K562 (cell line): ENCODE measurements at regions of chr4 and their contacts with region 1.

Region 1: DNA sequence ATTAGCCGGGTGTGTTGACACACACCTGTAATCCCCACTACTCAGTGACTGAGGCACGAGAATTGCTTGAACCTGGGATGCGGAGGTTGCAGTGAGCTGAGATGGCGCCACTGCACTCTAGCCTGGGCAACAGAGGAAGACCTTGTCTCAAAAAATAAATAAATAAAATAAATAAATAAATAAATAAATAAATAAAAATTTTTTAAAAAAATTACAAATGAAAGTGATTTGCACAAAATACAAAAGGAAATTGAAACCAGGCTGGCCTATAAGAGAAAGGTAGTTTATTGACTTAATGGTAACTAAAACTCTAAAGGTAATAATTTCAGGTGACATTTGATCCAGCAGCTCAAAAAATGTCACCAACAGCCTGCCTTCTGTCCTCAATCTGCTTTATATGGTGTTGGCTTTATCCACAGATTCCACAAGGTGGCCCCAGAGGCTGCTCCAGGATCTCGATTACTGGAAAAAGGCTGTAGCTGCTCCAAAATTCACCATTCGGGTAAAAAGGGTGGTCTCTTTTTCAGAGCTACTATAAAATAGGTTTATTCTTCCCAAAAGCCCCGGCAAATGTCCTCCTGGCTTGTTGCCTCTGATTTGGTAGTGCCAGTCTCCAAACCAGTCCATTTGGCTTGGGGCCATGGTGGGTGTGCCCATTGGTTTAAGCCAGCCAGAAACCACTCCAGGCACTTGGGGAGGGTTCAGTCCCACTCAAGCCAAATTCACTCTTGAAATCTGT is 61.4 kb upstream of the TRIM2 start:
- DNase-seq: peak in 2 of 4 experiments; percentile 68 to 74
- ATAC-seq: peak; percentile 84
- H3K4me3 ChIP-seq: no peak overlapping the region
- H3K27ac ChIP-seq: no peak overlapping the region
- H3K4me1 ChIP-seq: peaks cover 2 to 18% of the 10 kb centered on the region in 2 experiments; a peak in 2 of 5 replicates
- H3K27me3 ChIP-seq: peaks cover 0 to 4% of the 10 kb centered on the region in 2 experiments; a peak in 1 of 5 replicates
- CTCF ChIP-seq: peak; percentile 68 to 89 (median 76)
- EP300 ChIP-seq: peak; percentile 17; the same call in 1 of the 2 replicates
- POLR2A ChIP-seq: no peak
- RAD21 ChIP-seq: peak; percentile 83 to 85

Region 2: GRCh38 chr4:152910521-152910920 is 232.3 kb before region 1 on chr4:
- CTCF ChIA-PET with region 1: no interaction called
- POLR2A ChIA-PET with region 1: no interaction called
- in situ Hi-C with region 1: no loop called
- intact Hi-C with region 1: no loop called
- DNase-seq: no peak
- ATAC-seq: no peak
- H3K4me3 ChIP-seq: no peak overlapping the region
- H3K27ac ChIP-seq: no peak overlapping the region
- H3K4me1 ChIP-seq: no peaks in the 10 kb centered on the region
- H3K27me3 ChIP-seq: no peaks in the 10 kb centered on the region
- CTCF ChIP-seq: no peak
- EP300 ChIP-seq: no peak
- POLR2A ChIP-seq: no peak
- RAD21 ChIP-seq: no peak

Region 3: DNA sequence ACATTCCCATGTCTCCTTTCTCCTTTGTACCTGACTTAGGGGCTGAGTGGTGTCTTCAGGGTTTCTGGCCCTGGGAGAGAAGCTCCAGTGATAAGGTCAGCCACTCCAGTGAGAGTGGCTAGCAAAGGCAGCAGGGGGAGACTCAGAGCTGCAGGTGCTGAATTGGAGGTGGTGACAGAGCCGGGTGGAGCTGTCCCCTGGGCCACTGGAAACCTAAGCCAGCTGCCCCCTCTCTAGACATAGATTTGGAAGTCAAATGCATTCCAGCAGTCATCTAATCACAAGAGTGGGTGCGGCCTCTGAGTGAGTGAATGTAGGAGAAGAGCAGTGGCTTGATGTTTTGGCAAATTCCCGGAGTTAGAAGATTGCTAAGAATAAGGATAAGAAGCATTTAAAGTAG is 89.9 kb after region 1 on chr4:
- CTCF ChIA-PET with region 1: no interaction called
- POLR2A ChIA-PET with region 1: no interaction called
- in situ Hi-C with region 1: no loop called
- intact Hi-C with region 1: loop called (anchors 5 kb)
- DNase-seq: peak in 2 of 4 experiments; percentile 32 to 35
- ATAC-seq: peak; percentile 97
- H3K4me3 ChIP-seq: no peak overlapping the region
- H3K27ac ChIP-seq: no peak overlapping the region
- H3K4me1 ChIP-seq: no peaks in the 10 kb centered on the region
- H3K27me3 ChIP-seq: peaks cover 16 to 23% of the 10 kb centered on the region in 2 experiments
- CTCF ChIP-seq: peak; percentile 51 to 55 (median 54)
- EP300 ChIP-seq: no peak
- POLR2A ChIP-seq: no peak
- RAD21 ChIP-seq: peak; percentile 29 to 57; a peak in 2 of 4 replicates

Region 4: DNA sequence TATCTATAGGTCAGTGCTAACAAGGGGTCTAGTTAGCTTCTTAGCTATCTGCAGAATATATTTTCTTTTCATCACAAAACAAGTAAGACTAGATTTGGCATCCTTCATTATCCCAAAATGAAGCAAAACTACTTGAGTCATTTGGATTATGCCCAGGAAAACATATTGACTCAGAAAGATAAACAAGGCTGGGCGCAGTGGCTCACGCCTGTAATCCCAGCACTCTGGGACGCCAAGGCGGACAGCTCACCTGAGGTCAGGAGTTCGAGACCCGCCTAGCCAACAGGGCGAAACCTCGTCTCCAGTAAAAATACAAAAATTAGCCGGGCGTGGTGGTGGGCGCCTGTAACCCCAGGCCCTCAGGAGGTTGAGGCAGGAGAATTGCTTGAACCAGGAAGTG is 183.6 kb after region 1 on chr4:
- CTCF ChIA-PET with region 1: no interaction called
- POLR2A ChIA-PET with region 1: interaction called, 3 read pairs
- in situ Hi-C with region 1: loop called (anchors 10 kb)
- intact Hi-C with region 1: no loop called
- DNase-seq: no peak
- ATAC-seq: no peak
- H3K4me3 ChIP-seq: no peak overlapping the region
- H3K27ac ChIP-seq: no peak overlapping the region
- H3K4me1 ChIP-seq: no peaks in the 10 kb centered on the region
- H3K27me3 ChIP-seq: peaks cover 9 to 11% of the 10 kb centered on the region in 2 experiments; a peak in 4 of 5 replicates
- CTCF ChIP-seq: no peak
- EP300 ChIP-seq: no peak
- POLR2A ChIP-seq: no peak
- RAD21 ChIP-seq: no peak

Region 5: GRCh38 chr4:153432968-153433753 is 290.3 kb after region 1 on chr4:
- CTCF ChIA-PET with region 1: no interaction called
- POLR2A ChIA-PET with region 1: no interaction called
- in situ Hi-C with region 1: no loop called
- intact Hi-C with region 1: loop called (anchors 10 kb)
- DNase-seq: peak; percentile 50 to 85 (median 70)
- ATAC-seq: peak; percentile 95
- H3K4me3 ChIP-seq: no peak overlapping the region
- H3K27ac ChIP-seq: peak overlapping the region; percentile 49; the same call in 1 of the 3 replicates
- H3K4me1 ChIP-seq: peaks cover 10 to 11% of the 10 kb centered on the region in 2 experiments; a peak in 4 of 5 replicates
- H3K27me3 ChIP-seq: no peaks in the 10 kb centered on the region
- CTCF ChIP-seq: peak; percentile 88 to 93 (median 88)
- EP300 ChIP-seq: no peak; the same call in 1 of the 2 replicates
- POLR2A ChIP-seq: no peak
- RAD21 ChIP-seq: peak; percentile 84 to 94

Region 6: GRCh38 chr4:153649572-153649991 is 506.7 kb after region 1 on chr4:
- CTCF ChIA-PET with region 1: no interaction called
- POLR2A ChIA-PET with region 1: no interaction called
- in situ Hi-C with region 1: no loop called
- intact Hi-C with region 1: loop called (anchors 1 kb)
- DNase-seq: peak in 1 of 4 experiments; percentile 62
- ATAC-seq: peak; percentile 87
- H3K4me3 ChIP-seq: no peak overlapping the region
- H3K27ac ChIP-seq: no peak overlapping the region
- H3K4me1 ChIP-seq: no peaks in the 10 kb centered on the region; a peak in 1 of 5 replicates
- H3K27me3 ChIP-seq: peaks cover 0 to 12% of the 10 kb centered on the region in 2 experiments; a peak in 2 of 5 replicates
- CTCF ChIP-seq: peak; percentile 57 to 68 (median 57)
- EP300 ChIP-seq: no peak
- POLR2A ChIP-seq: no peak
- RAD21 ChIP-seq: peak; percentile 56 to 74